Activated T-helper 2 cell treated with anti-CD3 and anti-CD28 coated beads, Interferon-gamma antibody, Interleukin-2, Interleukin-4, amounts not matched to agents 10 μg/mL and 5 μg/mL and 100 μg/mL, durations not matched to agents 14 hours and 24 hours and 36 hours (primary cell): ENCODE measurements at regions of chr6 and their contacts with region 1.

Region 1: GRCh38 chr6:162151021-162151665 is 576.4 kb downstream of the PRKN start:
- DNase-seq: no peak
- H3K4me3 Mint-ChIP-seq: no peak overlapping the region
- H3K27ac Mint-ChIP-seq: no peak overlapping the region
- H3K4me1 Mint-ChIP-seq: peaks cover 21% of the 10 kb centered on the region
- H3K27me3 Mint-ChIP-seq: no peaks in the 10 kb centered on the region

Region 2: GRCh38 chr6:162109480-162110050 is 41.6 kb before region 1 on chr6:
- intact Hi-C with region 1: loop called (anchors 5 kb)
- DNase-seq: no peak
- H3K4me3 Mint-ChIP-seq: no peak overlapping the region
- H3K27ac Mint-ChIP-seq: no peak overlapping the region
- H3K4me1 Mint-ChIP-seq: peaks cover 12% of the 10 kb centered on the region
- H3K27me3 Mint-ChIP-seq: no peaks in the 10 kb centered on the region

Region 3: GRCh38 chr6:162119341-162119740 is 31.8 kb before region 1 on chr6:
- intact Hi-C with region 1: loop called (anchors 2 kb)
- DNase-seq: no peak
- H3K4me3 Mint-ChIP-seq: no peak overlapping the region
- H3K27ac Mint-ChIP-seq: no peak overlapping the region
- H3K4me1 Mint-ChIP-seq: peaks cover 7% of the 10 kb centered on the region
- H3K27me3 Mint-ChIP-seq: no peaks in the 10 kb centered on the region